BJ (cell line): ENCODE measurements at regions of chr11 and their contacts with region 1.

Region 1: DNA sequence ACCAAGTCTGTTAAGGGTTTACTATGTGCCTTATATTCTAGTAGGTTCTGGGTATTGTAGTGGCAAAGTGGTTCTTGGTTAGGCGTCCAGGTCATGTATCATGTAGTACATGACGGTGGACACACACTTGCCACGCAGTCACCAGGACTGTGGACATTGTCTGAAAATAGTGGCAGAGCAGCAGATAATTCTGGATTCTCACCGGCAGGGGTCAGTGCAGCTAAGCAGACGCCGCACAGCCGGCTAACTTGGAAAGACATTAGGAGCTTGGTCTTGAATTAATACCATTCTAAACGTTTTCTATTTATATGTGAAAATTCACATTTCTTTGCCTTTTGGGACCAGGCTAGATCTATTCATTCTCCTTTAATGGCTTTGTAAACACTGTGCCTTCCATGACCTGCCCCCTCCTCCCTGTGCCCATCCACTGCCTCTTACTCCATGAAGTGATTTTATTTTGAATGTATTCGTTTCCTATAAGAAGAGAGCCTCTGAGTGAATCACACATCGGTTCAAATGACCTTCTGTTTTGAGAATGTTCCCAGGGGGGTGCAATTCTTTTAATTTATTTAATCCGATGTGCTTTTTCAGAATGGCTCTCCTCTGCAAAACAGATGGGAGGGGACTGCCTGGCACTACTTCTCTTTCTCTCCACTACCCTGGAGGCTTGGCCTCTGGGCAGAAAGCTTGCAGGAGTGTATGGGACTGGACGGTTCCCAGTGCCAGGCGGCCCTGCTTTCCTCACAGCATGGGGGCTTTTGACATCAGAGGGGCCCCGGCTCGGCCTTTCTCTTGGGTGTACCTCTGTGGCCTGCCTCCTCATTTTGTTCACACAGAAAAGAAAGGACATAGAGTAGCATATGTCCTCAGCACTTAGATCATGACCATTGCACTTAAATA is 378.0 kb downstream of the NTM start:
- DNase-seq: no peak
- H3K4me3 ChIP-seq: no peak overlapping the region
- H3K27me3 ChIP-seq: no peaks in the 10 kb centered on the region
- CTCF ChIP-seq: peak; percentile 89

Region 2: GRCh38 chr11:131534611-131535010 is 213.8 kb before region 1 on chr11:
- CTCF ChIA-PET with region 1: no interaction called
- POLR2A ChIA-PET with region 1: no interaction called
- DNase-seq: no peak
- H3K4me3 ChIP-seq: no peak overlapping the region
- H3K27me3 ChIP-seq: no peaks in the 10 kb centered on the region
- CTCF ChIP-seq: no peak

Region 3: DNA sequence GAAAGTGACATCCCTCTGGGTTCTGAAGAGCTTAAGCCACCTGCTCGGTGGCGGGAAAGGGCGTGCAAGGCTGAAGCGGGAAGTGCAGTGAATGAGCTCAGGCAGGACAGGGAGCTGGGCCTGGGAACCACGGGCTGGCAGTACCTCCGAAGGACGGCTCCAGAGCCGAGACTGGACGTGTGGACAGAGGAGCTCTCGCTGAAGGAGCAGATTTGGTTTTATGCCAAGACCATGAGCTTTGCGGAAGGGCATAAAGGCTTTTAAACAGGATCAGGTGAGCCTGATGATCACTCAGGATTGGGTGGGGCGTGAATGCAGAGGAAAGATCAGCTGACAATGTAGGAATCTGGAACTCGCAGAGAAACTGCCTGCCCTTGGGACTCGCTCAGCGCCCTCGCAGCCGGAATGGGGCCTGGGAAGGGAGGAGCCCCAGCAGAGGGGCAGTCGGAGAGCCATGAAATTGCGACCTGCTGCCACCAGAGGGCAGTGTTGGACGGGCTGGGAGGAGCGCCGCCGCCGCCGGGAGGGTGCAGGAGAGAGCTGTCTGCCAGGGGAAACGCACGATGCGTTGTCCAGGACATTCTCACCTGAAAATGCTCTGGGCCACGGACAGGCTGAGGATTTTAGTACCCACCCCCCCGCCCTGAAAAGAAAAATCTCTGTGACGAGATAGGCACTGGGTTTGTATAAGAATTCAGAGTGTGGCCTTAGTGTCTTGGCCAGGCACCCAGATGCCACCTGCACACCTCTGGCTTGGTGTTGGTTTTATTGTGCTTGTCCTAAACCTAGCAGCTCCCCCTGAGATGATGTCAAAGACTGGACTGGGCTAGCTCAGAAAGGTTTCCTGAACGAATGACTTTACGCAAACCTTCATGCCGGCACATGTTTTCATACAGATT is 53.6 kb before region 1 on chr11:
- CTCF ChIA-PET with region 1: interaction called, 30 read pairs
- POLR2A ChIA-PET with region 1: no interaction called
- DNase-seq: peak; percentile 18
- H3K4me3 ChIP-seq: no peak overlapping the region
- H3K27me3 ChIP-seq: no peaks in the 10 kb centered on the region
- CTCF ChIP-seq: peak; percentile 98

Region 4: GRCh38 chr11:131770801-131771200 is 22.4 kb after region 1 on chr11:
- CTCF ChIA-PET with region 1: interaction called, 13 read pairs
- POLR2A ChIA-PET with region 1: no interaction called
- DNase-seq: no peak
- H3K4me3 ChIP-seq: no peak overlapping the region
- H3K27me3 ChIP-seq: no peaks in the 10 kb centered on the region
- CTCF ChIP-seq: no peak

Region 5: DNA sequence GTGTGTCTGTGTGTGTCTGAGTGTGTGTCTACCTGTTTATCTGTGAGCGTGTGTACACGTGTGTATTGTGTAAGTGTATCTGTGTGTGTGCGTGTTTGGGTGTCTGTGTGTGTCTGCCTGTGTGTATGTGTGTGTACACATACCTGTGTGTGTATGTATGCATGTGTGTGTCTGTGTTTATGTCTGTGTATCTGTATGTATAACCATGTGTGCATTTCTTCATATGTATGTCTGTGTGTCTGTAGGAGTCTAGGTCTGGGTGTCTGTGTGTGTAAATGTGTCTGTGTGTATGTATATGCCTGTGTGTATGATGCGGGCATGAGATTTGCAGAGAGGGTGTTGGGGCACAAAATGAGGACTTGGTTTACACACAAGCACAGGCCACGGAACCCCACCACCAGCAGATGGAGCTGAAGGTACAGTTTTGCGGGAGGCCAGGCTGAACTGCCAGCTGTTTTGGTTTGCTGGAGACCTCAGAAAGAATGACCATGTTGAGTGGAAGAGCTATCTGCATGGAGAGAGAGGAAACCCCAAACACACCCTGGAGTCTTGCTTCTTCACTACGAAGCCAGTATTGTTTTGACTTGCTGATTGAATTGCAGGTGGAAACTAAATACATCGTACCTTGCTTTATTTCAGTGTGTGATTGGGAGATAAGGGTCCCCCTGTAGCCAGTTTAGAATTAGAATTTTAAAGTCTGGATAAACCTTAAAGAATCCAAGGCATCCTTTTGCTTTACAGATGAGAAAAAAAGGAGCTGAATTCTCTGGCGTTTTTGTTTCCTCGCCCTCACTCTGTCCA is 119.3 kb after region 1 on chr11:
- CTCF ChIA-PET with region 1: interaction called, 19 read pairs
- POLR2A ChIA-PET with region 1: no interaction called
- DNase-seq: peak; percentile 18
- H3K4me3 ChIP-seq: no peak overlapping the region
- H3K27me3 ChIP-seq: no peaks in the 10 kb centered on the region
- CTCF ChIP-seq: peak; percentile 94

Region 6: DNA sequence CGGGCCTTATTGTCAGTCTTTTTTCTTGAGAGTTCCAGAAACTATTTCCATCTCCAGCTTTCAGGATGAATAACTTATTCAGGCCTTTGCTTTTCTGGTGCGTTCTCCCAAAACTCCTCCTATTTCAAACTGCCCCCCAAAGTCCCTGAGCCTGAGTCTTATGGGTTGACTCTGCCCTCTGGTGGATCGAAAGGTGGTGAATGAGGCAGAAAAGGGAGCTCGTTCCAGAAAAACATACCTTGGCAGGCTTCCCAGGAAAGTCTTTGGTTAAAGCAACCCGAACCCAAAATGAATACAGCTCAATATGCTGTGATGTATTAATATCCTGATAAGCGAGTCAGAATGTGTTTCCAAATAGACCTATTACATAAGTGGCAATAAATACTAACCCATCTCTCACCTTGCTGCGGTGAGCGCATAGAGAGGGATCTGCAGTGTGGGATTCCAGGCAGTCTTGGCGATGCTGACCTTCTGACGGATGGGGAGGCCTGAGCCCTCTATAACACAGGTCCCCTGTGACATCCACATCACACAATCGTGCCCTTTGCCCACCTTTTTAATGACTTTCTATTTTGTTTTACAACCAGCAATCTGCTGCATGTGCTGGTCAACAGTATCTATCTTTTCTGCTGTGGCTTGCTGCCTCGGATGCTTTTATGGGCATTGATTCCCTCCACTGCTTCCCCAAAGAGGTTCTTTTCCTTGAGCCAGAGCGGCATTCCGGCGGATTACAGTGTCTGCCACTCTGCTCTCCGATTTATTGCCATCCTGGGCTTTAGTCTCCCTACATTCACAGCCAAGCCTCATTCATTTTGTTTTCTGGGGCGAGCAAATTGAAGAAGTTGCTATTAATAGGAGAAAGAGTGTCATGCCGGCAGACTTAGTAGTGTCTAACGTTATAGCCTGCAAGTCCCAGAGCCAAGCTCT is 378.8 kb after region 1 on chr11:
- CTCF ChIA-PET with region 1: interaction called, 41 read pairs
- POLR2A ChIA-PET with region 1: no interaction called
- DNase-seq: peak; percentile 26
- H3K4me3 ChIP-seq: peak overlapping the region; percentile 19
- H3K27me3 ChIP-seq: no peaks in the 10 kb centered on the region
- CTCF ChIP-seq: peak; percentile 79